ENCODE measurements at regions of chr7 and their contacts with region 1.

Region 1: DNA sequence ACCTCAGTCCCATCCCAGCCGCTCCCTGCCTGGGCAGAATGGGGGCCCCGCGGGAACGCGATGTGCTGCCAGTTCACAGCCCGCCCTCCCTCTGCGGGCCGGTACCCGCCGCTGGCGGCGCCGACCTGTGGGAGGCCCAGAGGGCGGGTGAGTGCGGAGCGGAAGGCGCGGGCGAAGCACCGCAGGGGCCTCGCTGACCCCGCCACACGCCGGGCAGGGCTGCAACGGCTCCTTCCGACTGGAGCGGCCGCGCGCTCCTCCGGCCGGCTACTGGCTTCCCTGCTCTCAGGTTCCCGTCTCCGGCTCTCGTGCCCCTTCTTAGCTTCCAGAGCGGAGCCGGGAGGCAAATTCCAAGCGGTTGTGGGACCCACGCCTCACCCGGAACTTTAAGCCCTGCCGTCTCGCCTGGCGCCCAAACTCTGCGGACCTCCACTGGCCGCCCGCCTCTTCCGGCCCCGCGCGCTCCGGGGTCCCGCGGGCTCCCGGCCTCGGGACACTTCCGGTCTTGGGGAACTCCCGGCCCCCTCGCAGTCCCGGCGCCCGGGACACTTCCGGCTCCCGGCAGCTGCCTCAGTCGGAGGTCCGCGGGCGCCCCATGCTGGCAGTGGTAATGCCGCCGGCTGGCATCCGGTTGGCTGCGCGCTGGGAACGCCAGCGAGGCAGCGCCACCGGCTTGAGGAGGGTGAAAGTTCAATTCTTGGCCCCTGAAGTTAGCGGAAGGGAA is at the start of gene CYREN:
- DNase-seq: peak; percentile 84
- H3K4me3 Mint-ChIP-seq: peak within 1 kb of the TSS; percentile 95
- H3K27ac Mint-ChIP-seq: peak within 1 kb of the TSS; percentile 96
- H3K4me1 Mint-ChIP-seq: peaks cover 38% of the 10 kb centered on the region
- H3K27me3 Mint-ChIP-seq: no peaks in the 10 kb centered on the region
- total RNA-seq, gene CYREN: 58.8 and 58.9 TPM in 2 replicates

Region 2: DNA sequence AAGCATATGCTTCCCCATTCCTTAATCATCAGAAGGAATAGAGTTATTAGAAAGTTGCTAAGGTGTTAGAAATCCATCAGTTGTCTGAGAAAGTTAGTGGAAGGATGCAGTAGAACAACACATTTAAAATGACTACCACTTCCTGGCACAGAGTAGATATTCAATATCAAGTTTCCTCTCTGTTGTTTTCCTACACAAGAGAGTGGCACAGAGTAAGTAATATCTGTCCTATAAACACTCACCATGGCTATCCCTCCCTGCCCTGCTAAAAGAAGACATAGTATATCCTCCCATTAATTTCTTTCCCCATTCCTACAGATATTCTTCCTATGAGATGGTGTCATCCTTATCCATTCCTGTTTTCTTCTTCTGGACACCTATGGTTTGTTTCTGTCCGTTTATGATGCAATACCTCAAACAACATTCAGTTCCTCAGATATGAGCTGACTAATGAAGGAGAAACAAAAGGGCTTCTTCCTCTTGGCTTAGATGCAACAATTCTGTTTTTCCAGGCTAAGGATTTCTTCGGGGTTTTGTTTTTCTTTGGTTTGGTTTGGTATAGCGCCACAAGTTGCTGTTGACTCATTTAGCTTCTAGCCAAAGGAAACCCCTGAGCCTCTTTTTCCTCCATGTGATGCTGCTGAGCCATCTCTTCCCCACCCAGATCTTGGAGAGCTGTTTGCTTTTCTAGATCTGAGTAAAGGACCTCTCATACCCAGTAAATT is 556.7 kb before region 1 on chr7:
- intact Hi-C with region 1: loop called (anchors 1 kb)
- DNase-seq: peak; percentile 5
- H3K4me3 Mint-ChIP-seq: peak overlapping the region; percentile 0
- H3K27ac Mint-ChIP-seq: peak overlapping the region; percentile 86
- H3K4me1 Mint-ChIP-seq: peaks cover 13% of the 10 kb centered on the region
- H3K27me3 Mint-ChIP-seq: peaks cover 15% of the 10 kb centered on the region

Region 3: GRCh38 chr7:134986363-134987251 is 183.8 kb before region 1 on chr7 and contains the start of gene AGBL3:
- intact Hi-C with region 1: loop called (anchors 1 kb)
- DNase-seq: peak; percentile 87
- H3K4me3 Mint-ChIP-seq: peak within 1 kb of the TSS; percentile 97
- H3K27ac Mint-ChIP-seq: peak within 1 kb of the TSS; percentile 86
- H3K4me1 Mint-ChIP-seq: peaks cover 49% of the 10 kb centered on the region
- H3K27me3 Mint-ChIP-seq: no peaks in the 10 kb centered on the region
- total RNA-seq, gene AGBL3: 1.5 and 1.9 TPM in 2 replicates

Region 4: DNA sequence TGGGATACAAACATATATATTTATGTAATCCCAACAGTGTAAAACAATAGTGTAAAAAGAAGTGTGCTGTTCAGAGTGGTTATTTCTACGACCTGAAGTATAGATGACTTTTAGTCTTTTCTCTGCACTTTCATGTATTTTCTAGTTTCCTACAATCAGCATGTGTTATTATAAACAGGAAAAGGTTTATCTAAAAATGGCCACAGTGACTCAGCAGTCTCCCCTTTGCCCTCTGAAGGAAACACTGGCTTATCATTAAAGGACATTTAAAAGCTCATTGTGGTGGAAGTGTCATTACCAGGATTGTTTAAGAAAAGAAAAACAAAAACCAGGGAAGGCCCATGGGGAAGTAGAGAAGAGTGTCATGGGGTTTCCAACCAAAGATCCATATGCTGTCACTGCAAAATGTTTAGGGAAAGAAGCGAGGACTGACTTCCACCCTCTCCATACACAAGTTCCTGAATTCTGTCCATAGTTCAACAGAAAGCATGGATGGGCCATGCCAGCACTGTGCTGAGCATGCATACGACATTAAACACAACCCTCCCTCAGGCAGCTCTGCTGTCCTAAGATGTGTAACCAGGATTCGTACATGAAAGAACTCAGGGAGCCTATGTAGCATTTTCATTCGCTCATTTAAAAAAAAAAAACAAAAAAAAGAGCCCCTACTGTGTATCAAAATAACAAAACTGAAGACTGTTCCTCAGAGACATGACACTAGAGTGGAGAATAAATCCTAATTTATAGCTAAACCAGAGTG is 10.2 kb before region 1 on chr7:
- intact Hi-C with region 1: loop called (anchors 1 kb)
- DNase-seq: no peak
- H3K4me3 Mint-ChIP-seq: peak overlapping the region; percentile 47
- H3K27ac Mint-ChIP-seq: peak overlapping the region; percentile 94
- H3K4me1 Mint-ChIP-seq: peaks cover 38% of the 10 kb centered on the region
- H3K27me3 Mint-ChIP-seq: no peaks in the 10 kb centered on the region

Region 5: DNA sequence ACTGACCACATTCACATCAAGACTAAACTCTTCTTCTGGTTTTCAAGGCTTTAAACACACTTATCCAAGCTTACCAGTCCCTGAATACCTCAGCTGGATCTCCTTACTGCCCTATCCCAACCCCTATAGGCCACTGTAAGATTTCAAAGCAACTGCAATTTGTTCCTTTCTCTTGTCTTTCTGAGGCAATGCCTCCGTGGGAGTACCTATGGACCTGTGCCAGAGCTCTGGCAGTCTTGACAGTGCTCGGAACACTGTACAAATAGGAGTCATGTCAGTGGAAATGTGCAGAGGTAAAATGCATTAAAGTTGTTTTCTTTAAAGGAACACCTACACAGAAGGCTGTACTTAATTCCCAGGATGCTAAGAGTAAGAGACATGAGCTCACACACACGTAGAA is 214.8 kb after region 1 on chr7:
- intact Hi-C with region 1: no loop called
- DNase-seq: no peak
- H3K4me3 Mint-ChIP-seq: no peak overlapping the region
- H3K27ac Mint-ChIP-seq: no peak overlapping the region
- H3K4me1 Mint-ChIP-seq: no peaks in the 10 kb centered on the region
- H3K27me3 Mint-ChIP-seq: no peaks in the 10 kb centered on the region

Region 6: GRCh38 chr7:135662373-135663114 is 492.1 kb after region 1 on chr7 and contains the start of gene STMP1:
- intact Hi-C with region 1: loop called (anchors 2 kb)
- DNase-seq: peak; percentile 93
- H3K4me3 Mint-ChIP-seq: peak within 1 kb of the TSS; percentile 97
- H3K27ac Mint-ChIP-seq: peak within 1 kb of the TSS; percentile 93
- H3K4me1 Mint-ChIP-seq: peaks cover 22% of the 10 kb centered on the region
- H3K27me3 Mint-ChIP-seq: no peaks in the 10 kb centered on the region
- total RNA-seq, gene STMP1: 22.7 and 24.7 TPM in 2 replicates